WTC11 (cell line): ENCODE measurements at regions of chr15 and their contacts with region 1.

Region 1: GRCh38 chr15:68924866-68925560 is 5.3 kb upstream of the SPESP1 start:
- DNase-seq: peak; percentile 88
- ATAC-seq: peak; percentile 96
- H3K4me3 Mint-ChIP-seq: no peak overlapping the region
- H3K27ac Mint-ChIP-seq: peak overlapping the region; percentile 1
- H3K4me1 Mint-ChIP-seq: peaks cover 5% of the 10 kb centered on the region; the same call in 1 of the 2 replicates
- H3K27me3 Mint-ChIP-seq: peaks cover 8% of the 10 kb centered on the region
- CTCF ChIP-seq: peak; percentile 72

Region 2: DNA sequence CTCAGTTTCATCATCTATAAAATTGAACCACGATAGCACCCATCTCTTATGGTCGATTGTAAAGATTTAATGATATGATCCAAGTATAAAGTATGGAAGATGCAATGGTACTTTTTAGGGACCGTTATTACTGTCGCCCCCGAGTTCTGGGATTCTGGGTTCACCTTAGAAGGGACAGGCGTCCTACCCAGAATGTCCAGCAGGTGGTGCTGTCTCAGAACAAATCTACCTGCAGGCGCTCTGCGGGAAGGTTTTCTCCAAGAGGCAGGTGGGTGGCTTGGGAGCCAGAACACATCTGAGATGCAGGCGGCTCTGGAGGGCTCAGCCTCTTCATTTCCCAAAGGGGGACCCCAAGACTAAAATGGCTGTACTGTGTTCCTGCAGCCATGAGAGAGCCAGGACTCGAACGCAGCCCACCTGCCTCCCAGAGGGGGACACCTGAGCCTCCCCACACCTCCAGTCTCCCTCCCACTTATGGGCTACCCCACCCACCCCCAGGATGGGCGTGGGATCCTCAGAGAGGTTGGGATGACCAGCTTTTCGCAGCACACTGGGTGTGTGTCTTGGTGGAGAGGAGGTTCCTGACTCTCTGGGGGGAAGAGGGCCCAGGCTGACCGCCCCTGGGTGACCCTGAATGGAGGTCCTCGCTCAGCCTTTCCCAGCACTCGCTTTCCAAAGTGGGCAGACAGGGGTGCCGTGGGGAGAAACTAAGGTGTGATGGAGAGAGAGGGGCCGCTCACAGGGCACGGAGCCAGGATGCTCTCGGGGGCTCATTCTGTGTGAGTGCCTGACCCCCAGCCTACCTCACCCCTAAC is 374.3 kb before region 1 on chr15:
- CTCF ChIA-PET with region 1: interaction called, 48 read pairs
- POLR2A ChIA-PET with region 1: no interaction called
- DNase-seq: peak; percentile 94
- ATAC-seq: peak; percentile 79
- H3K4me3 Mint-ChIP-seq: no peak overlapping the region
- H3K27ac Mint-ChIP-seq: no peak overlapping the region
- H3K4me1 Mint-ChIP-seq: no peaks in the 10 kb centered on the region
- H3K27me3 Mint-ChIP-seq: peaks cover 10% of the 10 kb centered on the region
- CTCF ChIP-seq: peak; percentile 94

Region 3: DNA sequence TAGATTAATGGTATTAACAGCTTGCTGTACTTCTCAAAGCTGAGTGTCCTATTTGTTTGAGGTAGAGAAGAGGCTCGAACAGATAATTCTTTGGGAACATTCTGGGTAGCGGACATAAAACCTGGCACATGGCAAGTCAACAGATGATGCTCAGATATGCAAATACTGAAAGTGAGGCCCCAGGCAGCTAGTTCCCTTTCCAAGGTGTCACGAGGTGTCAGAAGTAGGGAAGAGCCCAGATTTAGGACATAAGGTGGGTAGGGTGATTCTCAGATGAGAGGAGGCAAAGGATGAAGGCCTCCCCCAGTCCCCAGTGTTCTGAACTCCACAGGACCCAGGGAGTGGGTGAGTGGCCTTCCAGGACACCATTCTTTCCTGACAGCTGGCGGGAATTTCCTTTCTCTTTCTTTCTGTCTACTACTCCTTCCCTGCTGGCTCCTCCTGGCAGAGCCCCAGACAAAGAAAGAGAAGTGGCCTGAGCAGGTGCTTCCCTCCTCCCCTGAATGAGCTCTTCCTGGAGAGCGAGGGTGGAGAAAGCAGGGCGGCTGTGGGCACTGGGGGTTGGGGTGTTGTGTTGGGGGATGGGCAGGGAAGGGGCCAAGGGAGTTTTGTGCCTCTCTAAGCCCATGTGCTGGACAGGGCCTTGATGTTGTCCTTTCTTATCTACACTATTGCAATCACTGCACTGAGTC is 258.7 kb before region 1 on chr15:
- CTCF ChIA-PET with region 1: interaction called, 12 read pairs
- POLR2A ChIA-PET with region 1: no interaction called
- DNase-seq: peak; percentile 24
- ATAC-seq: peak; percentile 93
- H3K4me3 Mint-ChIP-seq: no peak overlapping the region
- H3K27ac Mint-ChIP-seq: no peak overlapping the region; the same call in none of the 2 replicates
- H3K4me1 Mint-ChIP-seq: peaks cover 18% of the 10 kb centered on the region
- H3K27me3 Mint-ChIP-seq: no peaks in the 10 kb centered on the region; the same call in 1 of the 2 replicates
- CTCF ChIP-seq: no peak

Region 4: DNA sequence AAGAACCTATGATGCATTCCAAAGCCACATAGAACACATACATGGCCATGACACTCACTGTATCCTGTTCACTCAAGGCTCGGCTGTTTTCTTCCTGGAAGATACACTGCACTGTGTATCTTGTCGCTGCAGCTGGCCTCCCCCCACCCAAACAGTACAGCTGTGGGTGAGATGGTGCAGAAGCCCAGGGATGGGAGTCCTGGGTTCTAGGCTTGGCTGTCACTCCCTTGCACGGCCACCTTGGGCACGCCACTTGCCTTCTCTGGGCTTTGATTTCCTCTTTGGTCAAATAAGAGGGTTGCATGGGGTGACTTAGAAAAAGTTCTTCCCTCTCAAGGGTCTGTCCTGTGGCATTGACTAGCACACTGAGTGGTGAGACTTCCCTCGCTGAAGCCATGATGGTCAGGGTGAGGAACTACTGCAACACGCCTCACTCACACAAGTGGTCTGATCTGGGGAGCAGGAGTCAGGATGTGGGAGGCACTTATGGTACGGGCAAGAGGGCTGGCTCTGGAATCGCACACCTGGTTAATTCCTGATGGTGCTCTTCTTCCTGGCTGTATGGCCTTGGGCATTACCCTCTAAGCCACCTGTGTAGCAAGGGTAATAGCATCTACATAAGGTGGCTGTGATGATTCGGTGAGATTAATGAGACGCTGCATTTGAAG is 148.4 kb before region 1 on chr15:
- CTCF ChIA-PET with region 1: interaction called, 10 read pairs
- POLR2A ChIA-PET with region 1: no interaction called
- DNase-seq: no peak
- ATAC-seq: peak; percentile 55
- H3K4me3 Mint-ChIP-seq: no peak overlapping the region
- H3K27ac Mint-ChIP-seq: no peak overlapping the region; the same call in 1 of the 2 replicates
- H3K4me1 Mint-ChIP-seq: peaks cover 12% of the 10 kb centered on the region
- H3K27me3 Mint-ChIP-seq: peaks cover 11% of the 10 kb centered on the region; the same call in 1 of the 2 replicates
- CTCF ChIP-seq: no peak

Region 5: DNA sequence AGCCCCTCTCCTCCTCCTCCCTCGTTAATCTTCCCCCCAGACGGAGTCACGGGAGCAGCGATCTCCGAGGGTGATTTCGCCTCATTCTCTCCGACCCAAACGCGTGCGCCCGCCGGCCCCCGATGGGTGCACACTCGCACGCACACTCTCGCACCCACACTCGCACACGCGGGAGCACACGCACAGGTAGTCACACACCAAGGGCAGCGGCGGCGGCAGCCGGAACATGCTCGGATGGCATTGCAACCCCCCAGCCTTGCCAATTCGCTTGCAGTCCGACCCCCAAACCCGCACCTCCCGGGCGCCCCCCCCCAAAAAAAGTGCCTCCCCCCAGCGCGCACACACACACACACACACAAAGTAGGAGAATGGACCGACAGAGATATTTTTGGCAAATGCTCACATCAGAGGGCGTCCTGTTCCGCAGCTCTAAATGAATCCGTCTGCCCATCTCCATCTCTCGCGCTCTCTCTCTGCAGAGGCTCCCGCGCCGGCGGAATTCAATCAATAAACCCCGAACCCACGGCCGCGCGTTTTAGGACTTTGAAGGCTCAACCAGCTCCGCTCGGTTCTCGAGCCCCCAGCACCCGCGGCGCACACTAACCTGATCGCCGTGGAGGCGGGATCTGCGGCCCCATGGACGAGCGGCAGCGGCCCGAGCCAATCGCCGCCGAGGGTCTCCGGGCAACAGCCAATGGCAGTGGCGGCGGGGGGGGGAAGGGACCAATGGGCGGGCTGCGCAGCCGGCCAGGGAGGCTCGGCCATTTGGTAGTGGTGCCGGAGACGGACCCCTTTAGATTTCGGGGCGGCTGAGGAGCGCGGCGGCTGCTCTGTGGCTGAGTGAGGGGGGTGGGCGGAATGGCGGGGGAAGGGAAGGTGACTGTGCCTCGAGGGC is 104.5 kb before region 1 on chr15 and contains the start of gene ANP32A:
- CTCF ChIA-PET with region 1: interaction called, 13 read pairs
- POLR2A ChIA-PET with region 1: no interaction called
- DNase-seq: peak; percentile 97
- ATAC-seq: peak; percentile 77
- H3K4me3 Mint-ChIP-seq: peak within 1 kb of the TSS; percentile 99
- H3K27ac Mint-ChIP-seq: peak within 1 kb of the TSS; percentile 98
- H3K4me1 Mint-ChIP-seq: peaks cover 39% of the 10 kb centered on the region
- H3K27me3 Mint-ChIP-seq: peaks cover 41% of the 10 kb centered on the region
- CTCF ChIP-seq: no peak
- total RNA-seq, gene ANP32A: 232 to 253 TPM (median 242 TPM) in 3 replicates

Region 6: GRCh38 chr15:68843425-68844311 is 81.3 kb before region 1 on chr15:
- CTCF ChIA-PET with region 1: no interaction called
- POLR2A ChIA-PET with region 1: no interaction called
- DNase-seq: peak; percentile 65
- ATAC-seq: peak; percentile 99
- H3K4me3 Mint-ChIP-seq: peak overlapping the region; percentile 79
- H3K27ac Mint-ChIP-seq: no peak overlapping the region
- H3K4me1 Mint-ChIP-seq: peaks cover 4% of the 10 kb centered on the region
- H3K27me3 Mint-ChIP-seq: peaks cover 49% of the 10 kb centered on the region
- CTCF ChIP-seq: no peak

Region 7: DNA sequence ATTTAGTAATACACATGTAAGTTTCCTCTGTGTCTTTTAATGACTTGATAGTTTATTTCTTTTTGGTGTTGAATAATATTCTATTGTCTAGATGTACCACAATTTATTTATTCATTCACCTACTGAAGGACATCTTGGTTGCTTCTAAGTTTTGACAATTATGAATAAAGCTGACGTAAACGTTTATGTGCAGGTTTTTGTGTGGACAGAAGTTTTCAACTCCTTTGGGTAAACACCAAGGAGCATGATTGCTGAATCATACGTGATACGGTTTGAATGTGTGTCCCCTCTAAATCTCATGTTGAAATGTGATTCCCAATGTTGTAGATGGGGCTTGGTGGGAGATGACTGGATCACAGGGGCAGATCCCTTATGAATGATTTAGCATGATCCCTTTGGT is 26.8 kb after region 1 on chr15:
- CTCF ChIA-PET with region 1: no interaction called
- POLR2A ChIA-PET with region 1: no interaction called
- DNase-seq: no peak
- ATAC-seq: no peak
- H3K4me3 Mint-ChIP-seq: no peak overlapping the region
- H3K27ac Mint-ChIP-seq: no peak overlapping the region
- H3K4me1 Mint-ChIP-seq: no peaks in the 10 kb centered on the region
- H3K27me3 Mint-ChIP-seq: no peaks in the 10 kb centered on the region; the same call in 1 of the 2 replicates
- CTCF ChIP-seq: no peak

Region 8: DNA sequence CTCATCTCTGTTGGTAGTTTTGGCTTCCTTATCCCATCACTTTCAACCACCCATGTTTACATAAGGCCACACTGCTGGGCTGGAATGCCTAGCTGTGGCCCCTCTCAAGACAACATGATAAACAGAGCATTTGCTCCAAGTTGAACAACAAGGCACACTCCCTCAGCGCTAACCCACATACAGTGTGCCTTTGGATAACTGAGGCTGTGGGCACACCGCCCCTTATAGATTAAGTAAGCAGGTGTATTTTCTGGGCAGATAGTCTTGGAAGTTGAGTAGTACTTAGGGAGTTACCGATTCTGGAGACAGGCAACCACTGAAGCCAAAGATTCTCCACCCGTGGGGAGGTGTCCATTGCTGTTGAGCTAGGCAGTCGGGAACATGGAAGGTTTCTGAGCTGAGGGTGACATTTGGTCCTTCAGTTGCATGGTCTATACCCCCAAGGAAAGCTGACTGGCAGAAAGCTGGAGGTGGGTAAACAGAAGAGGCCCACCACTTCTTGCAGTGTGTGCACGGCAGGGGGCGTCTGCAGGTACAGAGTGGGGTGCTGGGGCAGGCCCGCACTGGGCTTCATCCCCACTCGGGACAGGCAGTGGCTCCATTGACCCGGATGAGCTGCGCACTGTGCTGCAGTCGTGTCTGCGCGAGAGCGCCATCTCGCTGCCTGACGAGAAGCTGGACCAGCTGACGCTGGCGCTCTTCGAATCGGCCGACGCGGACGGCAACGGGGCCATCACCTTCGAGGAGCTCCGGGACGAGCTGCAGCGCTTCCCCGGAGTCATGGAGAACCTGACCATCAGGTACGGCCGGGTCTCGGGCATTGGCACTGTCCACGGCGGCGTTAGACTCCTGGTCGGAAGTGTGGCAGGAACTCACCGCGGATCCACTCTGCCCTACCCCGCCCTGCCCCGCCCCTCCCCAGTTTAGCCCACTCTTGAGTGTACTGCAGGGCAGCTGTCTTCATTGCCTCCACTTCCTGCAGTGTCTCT is 106.3 kb after region 1 on chr15:
- CTCF ChIA-PET with region 1: interaction called, 57 read pairs
- POLR2A ChIA-PET with region 1: no interaction called
- DNase-seq: peak; percentile 81
- ATAC-seq: peak; percentile 93
- H3K4me3 Mint-ChIP-seq: peak overlapping the region; percentile 58
- H3K27ac Mint-ChIP-seq: no peak overlapping the region
- H3K4me1 Mint-ChIP-seq: peaks cover 10% of the 10 kb centered on the region
- H3K27me3 Mint-ChIP-seq: peaks cover 18% of the 10 kb centered on the region
- CTCF ChIP-seq: 0 out of 2 replicates have a peak, but pooled peaks have one; percentile 32